ENCODE measurements at regions of chr5 and their contacts with region 1.

Region 1: DNA sequence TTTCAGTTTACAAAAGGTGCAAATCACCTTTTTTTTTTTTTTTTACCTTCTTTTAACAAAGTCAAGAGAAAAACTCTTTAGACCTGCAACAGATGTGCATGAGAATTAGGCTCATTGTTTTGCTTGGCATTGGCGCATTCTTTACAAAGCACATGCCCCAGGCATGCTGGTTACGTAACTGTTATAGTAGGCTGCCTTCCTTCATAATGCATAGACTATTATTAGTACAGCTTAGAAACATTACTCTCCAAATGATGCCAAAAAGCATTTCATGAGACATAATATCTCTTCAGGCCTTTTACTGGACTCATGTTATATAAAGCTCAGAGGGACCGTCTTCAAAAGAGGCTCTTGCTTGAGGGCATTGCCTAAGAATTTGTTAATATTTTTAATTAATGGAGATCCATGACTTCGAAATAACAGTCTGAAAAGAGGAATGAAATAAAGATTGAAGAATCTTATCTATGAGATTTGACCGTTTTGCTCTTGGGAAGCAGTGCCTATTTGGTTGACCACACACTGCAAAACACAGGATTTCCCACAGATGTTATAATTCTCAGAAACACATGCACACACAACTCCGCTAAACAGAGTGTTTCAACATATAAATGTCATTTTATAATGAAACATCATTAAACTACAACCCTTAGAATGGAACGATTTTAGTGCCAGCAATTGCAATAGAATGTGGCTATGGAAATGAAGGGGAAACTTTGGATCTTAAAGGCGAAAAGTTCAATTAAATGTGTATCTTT is 478.7 kb downstream of the PRR16 start:
- DNase-seq: no peak
- ATAC-seq: no peak
- H3K4me3 ChIP-seq: no peak overlapping the region
- H3K27ac ChIP-seq: no peak overlapping the region
- H3K4me1 ChIP-seq: no peaks in the 10 kb centered on the region
- H3K27me3 ChIP-seq: no peaks in the 10 kb centered on the region
- CTCF ChIP-seq: no peak

Region 2: DNA sequence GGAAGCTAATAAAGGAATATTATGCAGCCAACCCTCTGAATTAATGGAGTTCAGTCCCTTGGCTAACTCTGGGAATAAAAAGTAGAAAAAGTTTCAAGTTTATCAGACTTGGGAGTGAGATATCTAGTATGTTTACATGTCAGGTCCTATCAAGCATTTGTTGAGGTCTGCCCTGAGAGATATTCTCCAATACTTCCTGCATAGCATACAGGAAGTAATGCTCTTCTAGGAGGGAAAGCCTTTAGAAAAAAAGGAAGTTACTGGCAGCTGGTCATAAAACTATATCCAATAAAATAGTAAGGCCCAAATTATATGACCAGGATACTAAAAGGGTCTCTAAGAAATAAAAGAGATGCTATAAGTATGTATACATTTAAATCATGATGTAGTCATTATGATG is 314.8 kb after region 1 on chr5:
- CTCF ChIA-PET with region 1: interaction called, 11 read pairs
- POLR2A ChIA-PET with region 1: no interaction called
- in situ Hi-C with region 1: no loop called
- intact Hi-C with region 1: no loop called
- DNase-seq: no peak
- ATAC-seq: no peak
- H3K4me3 ChIP-seq: no peak overlapping the region
- H3K27ac ChIP-seq: no peak overlapping the region
- H3K4me1 ChIP-seq: no peaks in the 10 kb centered on the region
- H3K27me3 ChIP-seq: no peaks in the 10 kb centered on the region
- CTCF ChIP-seq: no peak

Measured in Panc1 (cell line).